ENCODE measurements at regions of chr2 and their contacts with region 1.

Region 1: GRCh38 chr2:101823347-101823791 is 125.9 kb downstream of the MAP4K4 start:
- DNase-seq: peak; percentile 35
- ATAC-seq: peak; percentile 65

Region 2: GRCh38 chr2:101520246-101520645 is 303.1 kb before region 1 on chr2:
- intact Hi-C with region 1: loop called (anchors 10 kb)
- DNase-seq: no peak
- ATAC-seq: no peak

Region 3: GRCh38 chr2:101704046-101704466 is 119.3 kb before region 1 on chr2:
- intact Hi-C with region 1: loop called (anchors 5 kb)
- DNase-seq: peak; percentile 42
- ATAC-seq: peak; percentile 60